Endothelial cell of umbilical vein (primary cell): ENCODE measurements at regions of chrX and their contacts with region 1.

Region 1: GRCh38 chrX:10554612-10555270 is 65.6 kb downstream of the MID1 start:
- DNase-seq: peak; percentile 86
- H3K4me3 ChIP-seq: peak overlapping the region in 1 of 3 experiments; percentile 9
- H3K27ac ChIP-seq: peak overlapping the region; percentile 75
- H3K4me1 ChIP-seq: peaks cover 18% of the 10 kb centered on the region
- H3K27me3 ChIP-seq: no peaks in the 10 kb centered on the region
- CTCF ChIP-seq: no peak
- POLR2A ChIP-seq: no peak

Region 2: DNA sequence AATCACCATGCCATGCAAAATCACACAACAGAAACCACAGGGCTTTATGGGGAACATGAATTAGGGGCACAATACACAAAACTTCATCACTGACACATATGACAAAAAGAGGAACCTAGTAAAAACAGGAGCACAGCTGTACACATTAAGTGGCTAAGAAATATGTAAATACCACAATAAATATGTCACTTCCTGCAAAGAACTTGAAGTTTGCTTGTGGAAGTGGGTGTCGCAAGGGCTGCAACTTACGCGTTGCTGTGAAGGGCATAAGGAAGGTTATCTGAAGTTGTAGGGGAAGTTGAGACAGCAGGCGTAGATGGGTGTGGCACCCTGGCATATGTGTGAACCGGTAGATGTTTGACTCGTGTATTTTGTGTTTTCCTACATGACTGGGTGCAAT is 355.5 kb before region 1 on chrX:
- CTCF ChIA-PET with region 1: no interaction called
- POLR2A ChIA-PET with region 1: no interaction called
- dilution Hi-C with region 1: no loop called
- intact Hi-C with region 1: no loop called
- DNase-seq: peak; percentile 11
- H3K4me3 ChIP-seq: no peak overlapping the region
- H3K27ac ChIP-seq: no peak overlapping the region
- H3K4me1 ChIP-seq: peaks cover 8% of the 10 kb centered on the region
- H3K27me3 ChIP-seq: no peaks in the 10 kb centered on the region
- CTCF ChIP-seq: no peak
- POLR2A ChIP-seq: no peak

Region 3: DNA sequence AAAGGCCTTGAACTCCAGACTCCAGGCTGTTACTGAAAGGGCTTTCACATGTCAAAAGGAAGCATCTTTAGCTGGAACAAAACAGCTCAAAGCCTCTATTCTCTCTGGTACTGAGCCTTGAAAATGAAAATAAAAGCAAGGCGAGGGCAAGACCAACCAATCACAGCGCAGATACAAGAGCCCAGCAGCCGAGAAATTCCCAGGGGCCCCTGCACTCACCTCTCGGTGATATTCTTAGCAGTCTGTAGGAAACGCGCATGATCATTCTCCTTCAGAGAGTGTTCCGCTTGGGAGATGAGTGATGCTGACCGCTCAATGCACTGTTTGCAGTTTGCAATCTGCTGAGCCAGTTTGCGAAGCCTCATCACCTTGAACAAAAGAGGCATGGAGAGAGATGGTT is 72.5 kb before region 1 on chrX:
- CTCF ChIA-PET with region 1: interaction called, 3 read pairs
- POLR2A ChIA-PET with region 1: no interaction called
- dilution Hi-C with region 1: no loop called
- intact Hi-C with region 1: loop called (anchors 2 kb)
- DNase-seq: peak; percentile 55
- H3K4me3 ChIP-seq: no peak overlapping the region
- H3K27ac ChIP-seq: peak overlapping the region; percentile 97
- H3K4me1 ChIP-seq: peaks cover 25% of the 10 kb centered on the region
- H3K27me3 ChIP-seq: no peaks in the 10 kb centered on the region
- CTCF ChIP-seq: no peak
- POLR2A ChIP-seq: no peak

Region 4: DNA sequence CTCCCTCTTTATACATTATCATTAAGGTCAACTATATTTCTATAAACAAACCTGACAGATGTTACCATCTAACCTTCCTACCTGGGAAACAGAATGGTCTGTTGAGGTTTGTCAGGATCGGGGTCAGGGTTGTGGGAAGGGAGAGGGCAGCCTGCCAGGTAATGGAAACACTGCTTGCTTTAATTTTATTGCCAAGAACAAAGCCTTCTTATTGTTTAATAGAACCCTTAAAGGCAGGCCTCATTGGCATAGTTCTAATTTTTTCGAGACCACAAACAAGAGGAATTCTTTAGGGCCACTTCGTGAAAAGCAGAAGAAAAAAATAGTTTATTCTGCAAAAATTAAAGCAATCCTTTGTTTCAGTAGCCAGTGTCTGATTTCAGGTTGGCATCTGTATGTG is 47.6 kb before region 1 on chrX:
- CTCF ChIA-PET with region 1: interaction called, 4 read pairs
- POLR2A ChIA-PET with region 1: no interaction called
- dilution Hi-C with region 1: no loop called
- intact Hi-C with region 1: loop called (anchors 5 kb)
- DNase-seq: peak; percentile 16
- H3K4me3 ChIP-seq: no peak overlapping the region
- H3K27ac ChIP-seq: no peak overlapping the region
- H3K4me1 ChIP-seq: peaks cover 19% of the 10 kb centered on the region
- H3K27me3 ChIP-seq: no peaks in the 10 kb centered on the region
- CTCF ChIP-seq: no peak
- POLR2A ChIP-seq: no peak

Region 5: GRCh38 chrX:10579112-10580011 is 24.6 kb after region 1 on chrX:
- CTCF ChIA-PET with region 1: interaction called, 8 read pairs
- POLR2A ChIA-PET with region 1: no interaction called
- dilution Hi-C with region 1: no loop called
- intact Hi-C with region 1: loop called (anchors 1 kb)
- DNase-seq: peak; percentile 84
- H3K4me3 ChIP-seq: peak overlapping the region in 1 of 3 experiments; percentile 59
- H3K27ac ChIP-seq: peak overlapping the region; percentile 99
- H3K4me1 ChIP-seq: peaks cover 58% of the 10 kb centered on the region
- H3K27me3 ChIP-seq: no peaks in the 10 kb centered on the region
- CTCF ChIP-seq: no peak
- POLR2A ChIP-seq: no peak

Region 6: GRCh38 chrX:10597871-10598270 is 43.1 kb after region 1 on chrX:
- CTCF ChIA-PET with region 1: interaction called, 13 read pairs
- POLR2A ChIA-PET with region 1: no interaction called
- dilution Hi-C with region 1: no loop called
- intact Hi-C with region 1: no loop called
- DNase-seq: peak; percentile 63
- H3K4me3 ChIP-seq: no peak overlapping the region
- H3K27ac ChIP-seq: no peak overlapping the region
- H3K4me1 ChIP-seq: no peaks in the 10 kb centered on the region
- H3K27me3 ChIP-seq: no peaks in the 10 kb centered on the region
- CTCF ChIP-seq: peak; percentile 46 to 63
- POLR2A ChIP-seq: no peak

Region 7: DNA sequence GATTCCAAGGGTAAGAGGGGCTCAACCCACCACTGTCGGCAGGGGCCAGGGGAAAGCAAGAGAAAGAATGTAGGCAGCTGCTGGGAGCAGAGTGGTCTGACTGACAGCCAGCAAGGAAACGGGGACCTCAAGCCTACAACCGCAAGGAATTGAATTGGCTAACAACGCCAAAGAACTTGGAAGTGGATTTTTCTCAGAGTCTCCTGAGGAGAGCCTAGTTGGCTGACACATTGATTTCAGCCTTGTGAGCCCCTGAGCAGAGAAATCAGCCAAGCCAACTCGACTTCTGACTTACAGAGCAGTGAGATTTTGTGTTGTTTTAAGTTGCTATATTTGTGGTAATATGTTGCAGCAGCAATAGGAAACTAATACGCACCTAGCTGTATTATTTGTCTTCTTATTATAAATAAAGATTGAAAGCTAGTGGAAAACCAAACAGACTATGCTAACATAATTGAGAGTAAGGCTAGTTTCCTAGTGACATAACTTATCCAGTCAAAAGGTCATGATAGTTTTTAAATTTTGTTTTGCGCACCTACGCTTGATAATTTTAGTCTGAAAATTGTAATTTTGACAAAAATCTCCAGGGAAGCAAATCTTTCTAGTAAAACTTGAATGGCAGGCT is 410.5 kb after region 1 on chrX:
- CTCF ChIA-PET with region 1: no interaction called
- POLR2A ChIA-PET with region 1: no interaction called
- dilution Hi-C with region 1: no loop called
- intact Hi-C with region 1: no loop called
- DNase-seq: no peak
- H3K4me3 ChIP-seq: no peak overlapping the region
- H3K27ac ChIP-seq: no peak overlapping the region
- H3K4me1 ChIP-seq: no peaks in the 10 kb centered on the region
- H3K27me3 ChIP-seq: no peaks in the 10 kb centered on the region
- CTCF ChIP-seq: no peak
- POLR2A ChIP-seq: no peak